Activated CD4-positive, alpha-beta T cell treated with anti-CD3 and anti-CD28 coated beads for 36 hours (primary cell): ENCODE measurements at regions of chr14 and their contacts with region 1.

Region 1: GRCh38 chr14:76962303-76962660 is 66.2 kb downstream of the IRF2BPL start:
- DNase-seq: no peak
- ATAC-seq: peak; percentile 15
- H3K4me3 Mint-ChIP-seq: peak overlapping the region; percentile 62
- H3K27ac Mint-ChIP-seq: peak overlapping the region; percentile 99
- H3K4me1 Mint-ChIP-seq: peaks cover 86% of the 10 kb centered on the region
- H3K27me3 Mint-ChIP-seq: no peaks in the 10 kb centered on the region

Region 2: GRCh38 chr14:76615331-76615730 is 347.0 kb before region 1 on chr14:
- CTCF ChIA-PET with region 1: no interaction called
- POLR2A ChIA-PET with region 1: no interaction called
- intact Hi-C with region 1: no loop called
- DNase-seq: no peak
- ATAC-seq: no peak
- H3K4me3 Mint-ChIP-seq: no peak overlapping the region
- H3K27ac Mint-ChIP-seq: no peak overlapping the region
- H3K4me1 Mint-ChIP-seq: no peaks in the 10 kb centered on the region
- H3K27me3 Mint-ChIP-seq: peaks cover 14% of the 10 kb centered on the region

Region 3: DNA sequence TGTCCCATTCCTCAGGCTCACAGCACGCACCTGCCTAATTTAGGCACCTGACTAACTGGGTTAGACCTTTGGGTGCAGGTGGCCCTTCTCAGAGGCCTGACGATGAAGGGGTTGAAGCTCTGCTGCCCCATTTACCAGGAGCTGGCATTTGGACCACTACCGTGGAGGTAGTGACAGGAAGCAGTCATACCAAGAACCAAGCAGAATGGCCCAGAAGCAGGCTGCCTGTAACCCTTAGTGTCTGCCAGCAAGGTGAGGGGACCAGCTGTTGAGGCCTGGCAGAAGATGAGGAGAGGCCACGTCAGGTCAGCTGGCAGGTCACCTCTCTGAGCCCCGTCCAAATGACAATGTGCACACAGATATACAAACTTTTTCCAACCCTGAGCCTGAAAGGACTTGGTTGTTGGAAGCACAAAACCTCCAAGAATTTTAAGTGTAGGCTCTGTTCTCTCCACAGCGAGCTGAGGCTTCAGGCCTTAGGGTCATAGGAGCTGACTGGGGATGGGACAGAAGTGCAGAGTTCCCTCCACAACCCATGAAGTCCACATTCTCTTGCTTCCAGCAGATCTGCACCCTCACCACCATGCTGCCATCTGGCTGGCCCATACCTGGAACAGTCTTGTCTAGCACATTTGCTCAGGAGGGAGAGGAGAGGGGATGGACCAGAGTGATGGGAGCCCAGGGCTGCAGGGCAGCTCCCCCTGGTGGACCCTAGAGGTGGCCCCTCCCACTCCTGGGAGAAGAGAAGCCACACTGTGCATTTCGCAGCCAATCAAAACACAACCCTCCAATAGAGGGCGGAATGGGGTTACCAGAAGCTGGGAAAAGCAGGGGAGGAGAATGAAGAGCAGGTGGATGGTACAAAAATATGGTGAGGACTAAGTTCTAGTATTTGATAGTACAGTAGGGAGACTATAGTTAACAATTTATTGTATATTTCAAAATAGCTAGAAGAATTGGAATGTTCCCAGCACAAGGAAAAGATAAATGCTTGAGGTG is 177.7 kb before region 1 on chr14:
- CTCF ChIA-PET with region 1: no interaction called
- POLR2A ChIA-PET with region 1: no interaction called
- intact Hi-C with region 1: no loop called
- DNase-seq: peak; percentile 81
- ATAC-seq: peak; percentile 85
- H3K4me3 Mint-ChIP-seq: no peak overlapping the region
- H3K27ac Mint-ChIP-seq: no peak overlapping the region
- H3K4me1 Mint-ChIP-seq: peaks cover 32% of the 10 kb centered on the region
- H3K27me3 Mint-ChIP-seq: no peaks in the 10 kb centered on the region

Region 4: GRCh38 chr14:76844223-76844622 is 118.1 kb before region 1 on chr14:
- CTCF ChIA-PET with region 1: no interaction called
- POLR2A ChIA-PET with region 1: no interaction called
- intact Hi-C with region 1: no loop called
- DNase-seq: peak; percentile 84
- ATAC-seq: peak; percentile 100
- H3K4me3 Mint-ChIP-seq: no peak overlapping the region
- H3K27ac Mint-ChIP-seq: peak overlapping the region; percentile 90
- H3K4me1 Mint-ChIP-seq: peaks cover 8% of the 10 kb centered on the region
- H3K27me3 Mint-ChIP-seq: peaks cover 4% of the 10 kb centered on the region

Region 5: GRCh38 chr14:76977793-76978720 is 15.8 kb after region 1 on chr14:
- CTCF ChIA-PET with region 1: no interaction called
- POLR2A ChIA-PET with region 1: interaction called, 15 read pairs
- intact Hi-C with region 1: loop called (anchors 1 kb)
- DNase-seq: peak; percentile 94
- ATAC-seq: peak; percentile 99
- H3K4me3 Mint-ChIP-seq: peak overlapping the region; percentile 53
- H3K27ac Mint-ChIP-seq: peak overlapping the region; percentile 92
- H3K4me1 Mint-ChIP-seq: peaks cover 26% of the 10 kb centered on the region
- H3K27me3 Mint-ChIP-seq: no peaks in the 10 kb centered on the region

Region 6: DNA sequence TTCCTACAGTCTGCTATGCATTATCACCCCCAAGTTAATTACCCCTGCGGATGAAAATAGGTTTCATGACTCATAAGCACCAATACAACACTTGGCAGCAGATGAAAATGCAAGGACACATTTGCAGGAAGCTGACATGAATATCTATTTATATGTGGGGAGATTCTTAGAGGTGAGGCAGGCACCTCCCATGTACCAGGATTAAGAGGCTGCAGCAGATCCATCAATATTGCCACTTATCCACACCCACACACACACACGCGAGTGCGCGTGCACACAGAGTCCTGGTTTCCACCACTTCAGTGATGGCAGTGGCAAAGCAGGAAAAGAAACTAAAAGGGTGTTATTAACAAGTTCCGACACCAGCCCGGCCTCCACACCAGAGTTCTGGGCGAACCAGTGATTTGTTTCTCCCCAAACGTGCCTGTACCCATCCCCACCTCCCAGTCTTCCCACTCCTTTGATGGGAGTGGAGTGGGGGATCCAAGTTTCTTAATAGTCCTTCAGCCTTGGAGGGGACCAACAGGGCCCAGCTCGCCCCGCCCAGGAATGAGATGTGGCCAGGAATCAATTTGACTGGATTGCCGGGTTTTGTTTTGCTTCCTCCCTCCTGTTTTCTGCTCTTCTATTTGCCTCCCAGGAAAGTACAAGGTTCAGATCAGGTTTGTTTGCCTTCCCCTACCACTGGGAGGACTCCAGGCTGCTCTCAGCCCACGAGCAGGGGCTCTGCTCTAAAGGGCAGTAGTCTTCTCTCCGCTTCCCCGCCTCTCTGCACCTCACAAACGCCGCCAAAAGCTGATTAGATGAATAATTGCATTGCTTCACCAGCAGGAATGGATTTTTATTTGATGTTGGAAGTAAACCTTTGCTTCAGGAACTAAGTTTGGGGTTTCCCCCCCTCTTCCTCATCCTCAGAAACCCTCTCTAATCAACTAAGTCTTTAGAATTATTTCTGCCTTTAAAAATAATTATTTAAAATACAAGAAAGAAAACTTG is 61.0 kb after region 1 on chr14:
- CTCF ChIA-PET with region 1: interaction called, 5 read pairs
- POLR2A ChIA-PET with region 1: interaction called, 12 read pairs
- intact Hi-C with region 1: loop called (anchors 1 kb)
- DNase-seq: peak; percentile 77
- ATAC-seq: peak; percentile 24
- H3K4me3 Mint-ChIP-seq: peak overlapping the region; percentile 59
- H3K27ac Mint-ChIP-seq: peak overlapping the region; percentile 81
- H3K4me1 Mint-ChIP-seq: peaks cover 43% of the 10 kb centered on the region
- H3K27me3 Mint-ChIP-seq: no peaks in the 10 kb centered on the region

Region 7: GRCh38 chr14:77033622-77034521 is 71.6 kb after region 1 on chr14:
- CTCF ChIA-PET with region 1: interaction called, 8 read pairs
- POLR2A ChIA-PET with region 1: interaction called, 12 read pairs
- intact Hi-C with region 1: no loop called
- DNase-seq: peak; percentile 94
- ATAC-seq: peak; percentile 77
- H3K4me3 Mint-ChIP-seq: peak overlapping the region; percentile 89
- H3K27ac Mint-ChIP-seq: peak overlapping the region; percentile 97
- H3K4me1 Mint-ChIP-seq: peaks cover 76% of the 10 kb centered on the region
- H3K27me3 Mint-ChIP-seq: no peaks in the 10 kb centered on the region

Region 8: DNA sequence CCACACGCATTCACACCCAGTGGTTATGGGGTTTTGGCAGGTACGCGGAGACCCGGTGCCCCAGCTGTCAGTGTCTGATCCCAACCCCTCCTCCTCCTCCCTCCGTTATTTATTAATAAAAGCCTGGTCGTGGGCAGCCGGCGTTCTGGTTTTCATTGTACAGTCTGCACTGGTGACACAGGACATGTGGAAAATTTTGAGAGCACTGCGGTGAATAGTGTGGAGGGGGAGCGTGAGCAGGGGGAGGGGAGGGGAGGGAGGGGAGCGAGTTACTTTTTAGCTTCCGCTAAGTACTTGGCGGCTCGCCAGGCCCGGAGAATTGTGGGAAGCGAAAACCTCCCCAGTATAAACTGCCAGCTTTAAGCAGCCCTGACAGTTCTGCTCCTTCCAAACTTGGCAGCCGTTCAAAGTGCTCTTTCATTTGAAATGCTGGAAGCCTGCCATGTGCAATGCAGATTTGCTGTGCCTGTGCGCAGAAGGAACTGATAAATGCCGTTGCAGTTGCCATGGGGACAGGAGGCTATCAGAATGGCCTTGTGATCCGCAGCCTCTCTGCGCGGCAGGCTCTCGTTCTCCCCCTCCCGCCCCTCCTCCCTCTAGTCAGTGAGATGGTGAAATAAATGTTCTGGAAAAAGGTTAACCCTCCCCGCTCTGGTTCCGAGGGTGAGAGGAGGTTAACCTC is 77.9 kb after region 1 on chr14:
- CTCF ChIA-PET with region 1: interaction called, 11 read pairs
- POLR2A ChIA-PET with region 1: interaction called, 8 read pairs
- intact Hi-C with region 1: loop called (anchors 1 kb)
- DNase-seq: peak; percentile 98
- ATAC-seq: peak; percentile 66
- H3K4me3 Mint-ChIP-seq: peak overlapping the region; percentile 63
- H3K27ac Mint-ChIP-seq: peak overlapping the region; percentile 93
- H3K4me1 Mint-ChIP-seq: peaks cover 89% of the 10 kb centered on the region
- H3K27me3 Mint-ChIP-seq: no peaks in the 10 kb centered on the region

Region 9: GRCh38 chr14:77124345-77125280 is 162.3 kb after region 1 on chr14:
- CTCF ChIA-PET with region 1: no interaction called
- POLR2A ChIA-PET with region 1: no interaction called
- intact Hi-C with region 1: no loop called
- DNase-seq: peak; percentile 77
- ATAC-seq: peak; percentile 77
- H3K4me3 Mint-ChIP-seq: peak overlapping the region; percentile 68
- H3K27ac Mint-ChIP-seq: peak overlapping the region; percentile 55
- H3K4me1 Mint-ChIP-seq: peaks cover 37% of the 10 kb centered on the region
- H3K27me3 Mint-ChIP-seq: peaks cover 9% of the 10 kb centered on the region